ENCODE measurements at regions of chr16 and their contacts with region 1.

Region 1: GRCh38 chr16:74666425-74667254 is at the start of gene RFWD3:
- DNase-seq: peak; percentile 98
- ATAC-seq: peak; percentile 99
- H3K4me3 Mint-ChIP-seq: peak within 1 kb of the TSS; percentile 85
- H3K27ac Mint-ChIP-seq: peak within 1 kb of the TSS; percentile 98
- H3K4me1 Mint-ChIP-seq: peaks cover 39% of the 10 kb centered on the region
- H3K27me3 Mint-ChIP-seq: no peaks in the 10 kb centered on the region
- CTCF ChIP-seq: no peak
- total RNA-seq, gene RFWD3: 96.5 to 99.8 TPM

Region 2: GRCh38 chr16:74623214-74623842 is 43.3 kb before region 1 on chr16:
- CTCF ChIA-PET with region 1: interaction called, 3 read pairs
- POLR2A ChIA-PET with region 1: interaction called, 12 read pairs
- intact Hi-C with region 1: no loop called
- DNase-seq: no peak
- ATAC-seq: no peak
- H3K4me3 Mint-ChIP-seq: no peak overlapping the region
- H3K27ac Mint-ChIP-seq: peak overlapping the region; percentile 26
- H3K4me1 Mint-ChIP-seq: peaks cover 30% of the 10 kb centered on the region
- H3K27me3 Mint-ChIP-seq: no peaks in the 10 kb centered on the region
- CTCF ChIP-seq: peak; percentile 68

Region 3: GRCh38 chr16:74650966-74651567 is 15.6 kb before region 1 on chr16:
- CTCF ChIA-PET with region 1: interaction called, 7 read pairs
- POLR2A ChIA-PET with region 1: interaction called, 55 read pairs
- intact Hi-C with region 1: no loop called
- DNase-seq: no peak
- ATAC-seq: no peak
- H3K4me3 Mint-ChIP-seq: no peak overlapping the region
- H3K27ac Mint-ChIP-seq: no peak overlapping the region
- H3K4me1 Mint-ChIP-seq: peaks cover 27% of the 10 kb centered on the region
- H3K27me3 Mint-ChIP-seq: no peaks in the 10 kb centered on the region
- CTCF ChIP-seq: peak; percentile 63

Region 4: GRCh38 chr16:74679983-74680382 is 13.3 kb after region 1 on chr16:
- CTCF ChIA-PET with region 1: interaction called, 3 read pairs
- POLR2A ChIA-PET with region 1: interaction called, 24 read pairs
- intact Hi-C with region 1: no loop called
- DNase-seq: no peak
- ATAC-seq: no peak
- H3K4me3 Mint-ChIP-seq: no peak overlapping the region
- H3K27ac Mint-ChIP-seq: no peak overlapping the region
- H3K4me1 Mint-ChIP-seq: peaks cover 2% of the 10 kb centered on the region
- H3K27me3 Mint-ChIP-seq: no peaks in the 10 kb centered on the region
- CTCF ChIP-seq: no peak

Region 5: DNA sequence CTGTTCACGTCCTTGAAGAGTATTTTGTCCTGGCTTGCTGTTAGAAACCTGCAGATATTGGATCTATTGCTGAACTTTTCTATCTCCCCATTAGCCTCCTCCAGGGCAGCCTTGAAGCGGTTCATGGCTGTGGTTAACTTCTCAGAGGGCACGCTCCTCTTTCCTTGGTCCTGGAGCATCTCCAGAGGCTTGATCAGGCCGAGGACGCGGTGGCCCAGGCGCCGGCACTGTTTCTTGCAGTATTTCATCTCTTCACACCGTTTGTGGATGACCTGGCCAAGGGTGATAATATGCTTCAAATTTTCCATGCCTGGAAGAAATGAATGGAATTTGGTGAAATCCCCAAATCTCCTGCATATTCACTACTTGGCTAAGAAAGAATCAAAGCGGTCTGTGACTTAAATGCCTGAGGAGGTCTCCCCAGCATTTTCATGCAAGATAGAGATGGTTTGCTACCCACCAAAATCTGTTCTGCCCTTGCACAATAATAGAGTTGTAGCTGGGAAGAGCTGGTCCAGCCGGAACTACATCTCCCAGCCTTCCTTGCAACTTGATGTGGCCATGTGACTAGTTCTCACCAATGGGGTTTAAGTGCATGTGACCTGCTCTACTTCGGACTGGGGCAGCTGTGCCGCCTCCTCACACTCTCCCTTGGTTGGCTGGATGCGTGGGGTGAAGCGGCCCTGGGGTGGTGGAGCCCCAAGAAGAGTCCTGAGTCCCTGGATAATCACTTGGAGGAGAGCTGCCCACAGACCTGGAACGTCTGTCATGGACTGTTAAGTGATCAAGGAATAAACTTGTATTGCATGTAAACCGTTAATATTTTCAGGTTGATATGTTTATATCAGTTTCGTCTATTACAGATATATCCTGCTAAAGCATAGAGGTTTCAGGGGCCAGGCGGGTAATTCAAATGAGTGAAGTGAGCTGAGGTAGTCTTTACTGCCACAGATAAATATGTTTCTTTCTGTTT is 29.1 kb after region 1 on chr16:
- CTCF ChIA-PET with region 1: interaction called, 4 read pairs
- POLR2A ChIA-PET with region 1: interaction called, 51 read pairs
- intact Hi-C with region 1: no loop called
- DNase-seq: peak; percentile 82
- ATAC-seq: peak; percentile 82
- H3K4me3 Mint-ChIP-seq: peak overlapping the region; percentile 64
- H3K27ac Mint-ChIP-seq: no peak overlapping the region
- H3K4me1 Mint-ChIP-seq: peaks cover 34% of the 10 kb centered on the region
- H3K27me3 Mint-ChIP-seq: no peaks in the 10 kb centered on the region
- CTCF ChIP-seq: no peak

Region 6: GRCh38 chr16:74726716-74727115 is 60.1 kb after region 1 on chr16:
- CTCF ChIA-PET with region 1: interaction called, 10 read pairs
- POLR2A ChIA-PET with region 1: no interaction called
- intact Hi-C with region 1: no loop called
- DNase-seq: peak; percentile 70
- ATAC-seq: peak; percentile 45
- H3K4me3 Mint-ChIP-seq: no peak overlapping the region
- H3K27ac Mint-ChIP-seq: no peak overlapping the region
- H3K4me1 Mint-ChIP-seq: peaks cover 7% of the 10 kb centered on the region
- H3K27me3 Mint-ChIP-seq: no peaks in the 10 kb centered on the region
- CTCF ChIP-seq: peak; percentile 66